ENCODE measurements at regions of chr2 and their contacts with region 1.

Region 1: GRCh38 chr2:10812362-10813162 is at the start of gene PDIA6:
- H3K4me3 Mint-ChIP-seq: peak within 1 kb of the TSS; percentile 89
- H3K27ac Mint-ChIP-seq: peak within 1 kb of the TSS; percentile 91
- H3K4me1 Mint-ChIP-seq: peaks cover 54% of the 10 kb centered on the region
- H3K27me3 Mint-ChIP-seq: peaks cover 14% of the 10 kb centered on the region

Region 2: GRCh38 chr2:10741139-10741538 is 71.4 kb before region 1 on chr2:
- intact Hi-C with region 1: loop called (anchors 10 kb)
- H3K4me3 Mint-ChIP-seq: no peak overlapping the region
- H3K27ac Mint-ChIP-seq: no peak overlapping the region
- H3K4me1 Mint-ChIP-seq: peaks cover 16% of the 10 kb centered on the region
- H3K27me3 Mint-ChIP-seq: peaks cover 3% of the 10 kb centered on the region

Region 3: GRCh38 chr2:10835052-10835970 is 22.7 kb after region 1 on chr2:
- intact Hi-C with region 1: no loop called
- H3K4me3 Mint-ChIP-seq: no peak overlapping the region
- H3K27ac Mint-ChIP-seq: no peak overlapping the region
- H3K4me1 Mint-ChIP-seq: no peaks in the 10 kb centered on the region
- H3K27me3 Mint-ChIP-seq: peaks cover 70% of the 10 kb centered on the region

Region 4: DNA sequence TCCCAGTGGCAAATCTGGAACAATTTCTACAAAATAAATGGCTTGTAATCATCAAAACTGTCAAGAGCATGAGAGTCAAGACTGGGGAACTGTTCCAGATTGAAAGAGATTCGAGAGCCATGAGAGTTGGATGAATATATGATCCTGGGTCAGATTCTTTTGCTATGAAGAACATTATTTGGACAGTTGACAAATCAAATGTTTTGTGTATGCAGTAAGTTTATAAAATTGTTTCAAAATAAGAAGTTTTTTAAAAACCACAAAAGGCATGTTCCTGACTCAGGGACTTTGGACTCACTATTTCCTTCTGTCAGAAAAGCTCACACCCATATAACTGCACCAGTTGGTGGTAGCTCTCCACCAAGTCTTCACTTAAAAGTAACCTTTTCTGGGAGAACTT is 493.4 kb after region 1 on chr2:
- intact Hi-C with region 1: no loop called
- H3K4me3 Mint-ChIP-seq: no peak overlapping the region
- H3K27ac Mint-ChIP-seq: no peak overlapping the region
- H3K4me1 Mint-ChIP-seq: peaks cover 24% of the 10 kb centered on the region
- H3K27me3 Mint-ChIP-seq: no peaks in the 10 kb centered on the region

Region 5: GRCh38 chr2:11344342-11344955 is 531.9 kb after region 1 on chr2 and contains the start of gene ROCK2:
- intact Hi-C with region 1: loop called (anchors 10 kb)
- H3K4me3 Mint-ChIP-seq: peak within 1 kb of the TSS; percentile 87
- H3K27ac Mint-ChIP-seq: peak within 1 kb of the TSS; percentile 92
- H3K4me1 Mint-ChIP-seq: peaks cover 22% of the 10 kb centered on the region
- H3K27me3 Mint-ChIP-seq: no peaks in the 10 kb centered on the region